ENCODE measurements at regions of chr12 and their contacts with region 1.

Region 1: GRCh38 chr12:27383429-27384260 is 51.0 kb downstream of the BMAL2 start:
- DNase-seq: peak; percentile 63
- H3K4me3 ChIP-seq: no peak overlapping the region
- H3K27ac ChIP-seq: no peak overlapping the region
- H3K27me3 ChIP-seq: no peaks in the 10 kb centered on the region
- CTCF ChIP-seq: peak; percentile 93

Region 2: GRCh38 chr12:27272701-27273028 is 111.0 kb before region 1 on chr12:
- CTCF ChIA-PET with region 1: no interaction called
- POLR2A ChIA-PET with region 1: no interaction called
- DNase-seq: no peak
- H3K4me3 ChIP-seq: no peak overlapping the region
- H3K27ac ChIP-seq: no peak overlapping the region
- H3K27me3 ChIP-seq: no peaks in the 10 kb centered on the region
- CTCF ChIP-seq: no peak

Region 3: GRCh38 chr12:27332407-27333301 is 51.0 kb before region 1 on chr12 and contains the start of gene BMAL2:
- CTCF ChIA-PET with region 1: interaction called, 12 read pairs
- POLR2A ChIA-PET with region 1: no interaction called
- DNase-seq: no peak
- H3K4me3 ChIP-seq: peak within 1 kb of the TSS; percentile 74
- H3K27ac ChIP-seq: peak within 1 kb of the TSS; percentile 78
- H3K27me3 ChIP-seq: no peaks in the 10 kb centered on the region
- CTCF ChIP-seq: no peak
- polyA plus RNA-seq, gene BMAL2: 22.9 and 28.8 TPM in 2 replicates

Region 4: GRCh38 chr12:27367078-27367477 is 16.6 kb before region 1 on chr12:
- CTCF ChIA-PET with region 1: interaction called, 16 read pairs
- POLR2A ChIA-PET with region 1: no interaction called
- DNase-seq: no peak
- H3K4me3 ChIP-seq: no peak overlapping the region
- H3K27ac ChIP-seq: no peak overlapping the region
- H3K27me3 ChIP-seq: no peaks in the 10 kb centered on the region
- CTCF ChIP-seq: no peak

Region 5: GRCh38 chr12:27394676-27395075 is 11.0 kb after region 1 on chr12:
- CTCF ChIA-PET with region 1: interaction called, 13 read pairs
- POLR2A ChIA-PET with region 1: no interaction called
- DNase-seq: no peak
- H3K4me3 ChIP-seq: no peak overlapping the region
- H3K27ac ChIP-seq: no peak overlapping the region
- H3K27me3 ChIP-seq: no peaks in the 10 kb centered on the region
- CTCF ChIP-seq: no peak

Region 6: DNA sequence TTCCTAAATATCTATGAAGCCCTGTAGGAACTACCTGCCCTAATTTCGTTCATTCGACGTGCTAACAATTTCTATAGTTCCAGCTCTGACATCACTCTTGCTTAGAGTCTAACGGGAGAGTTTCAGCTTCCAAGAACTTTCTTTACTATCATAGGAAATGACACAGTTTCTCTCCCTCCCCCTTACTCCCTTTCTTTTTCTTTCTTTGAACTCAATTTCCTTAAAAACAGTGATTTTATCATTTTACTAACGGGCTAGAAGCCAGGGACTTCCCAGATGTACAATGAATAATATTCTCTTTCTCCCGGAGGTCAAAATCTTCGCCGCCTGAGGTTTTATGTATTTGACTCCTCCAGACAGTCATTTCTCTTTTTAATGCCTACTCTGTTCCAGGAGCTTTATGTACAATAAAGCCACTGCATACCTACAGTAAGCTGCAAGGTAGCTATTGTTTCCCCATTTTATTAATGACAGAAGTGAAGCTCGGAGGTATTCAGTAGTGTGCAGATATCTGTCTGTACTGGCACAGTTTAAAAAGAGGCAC is 78.6 kb after region 1 on chr12:
- CTCF ChIA-PET with region 1: no interaction called
- POLR2A ChIA-PET with region 1: no interaction called
- DNase-seq: peak; percentile 26
- H3K4me3 ChIP-seq: no peak overlapping the region; the same call in 1 of the 2 replicates
- H3K27ac ChIP-seq: no peak overlapping the region
- H3K27me3 ChIP-seq: no peaks in the 10 kb centered on the region
- CTCF ChIP-seq: no peak

Region 7: DNA sequence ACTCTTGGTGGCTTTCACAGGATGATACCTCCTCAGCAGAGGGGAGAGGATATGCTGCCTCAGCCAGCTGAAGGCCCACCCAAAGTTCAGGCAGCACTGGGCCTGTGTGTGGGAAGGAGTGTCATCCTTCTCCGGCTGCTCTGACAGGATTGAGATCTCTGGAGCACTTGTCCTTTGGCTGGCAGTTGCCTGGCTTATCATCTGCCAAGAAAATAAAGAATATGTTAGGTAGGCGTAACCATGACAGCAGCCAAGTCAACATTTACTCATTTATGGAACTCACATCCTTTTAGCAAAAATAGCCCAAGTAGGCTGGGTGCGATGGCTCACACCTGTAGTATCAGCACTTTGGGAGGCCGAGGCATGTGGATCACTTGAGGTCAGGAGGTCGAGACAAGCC is 208.9 kb after region 1 on chr12:
- CTCF ChIA-PET with region 1: no interaction called
- POLR2A ChIA-PET with region 1: no interaction called
- DNase-seq: no peak
- H3K4me3 ChIP-seq: no peak overlapping the region
- H3K27ac ChIP-seq: no peak overlapping the region
- H3K27me3 ChIP-seq: no peaks in the 10 kb centered on the region
- CTCF ChIP-seq: no peak

Measured in AG04450 (cell line).